ENCODE measurements at regions of chr13 and their contacts with region 1.

Region 1: GRCh38 chr13:50893211-50893852 is 16.3 kb upstream of the RNASEH2B start:
- DNase-seq: peak; percentile 64
- ATAC-seq: peak; percentile 83
- H3K4me3 ChIP-seq: peak overlapping the region in 4 of 5 experiments; percentile 11 to 55 (median 30)
- H3K4me3 Mint-ChIP-seq: peak overlapping the region; percentile 85
- H3K27ac ChIP-seq: peak overlapping the region; percentile 76 to 78
- H3K27ac Mint-ChIP-seq: peak overlapping the region; percentile 95
- H3K4me1 ChIP-seq: peaks cover 53 to 56% of the 10 kb centered on the region in 2 donors
- H3K4me1 Mint-ChIP-seq: peaks cover 57% of the 10 kb centered on the region
- H3K27me3 ChIP-seq: no peaks in the 10 kb centered on the region
- H3K27me3 Mint-ChIP-seq: no peaks in the 10 kb centered on the region
- CTCF ChIP-seq: no peak

Region 2: GRCh38 chr13:50810998-50811397 is 82.3 kb before region 1 on chr13:
- CTCF ChIA-PET with region 1: interaction called, 5 read pairs
- POLR2A ChIA-PET with region 1: interaction called, 7 read pairs
- intact Hi-C with region 1: loop called (anchors 5 kb)
- DNase-seq: peak; percentile 76
- ATAC-seq: peak; percentile 94
- H3K4me3 ChIP-seq: peak overlapping the region in 1 of 5 experiments; percentile 32
- H3K4me3 Mint-ChIP-seq: peak overlapping the region; percentile 64
- H3K27ac ChIP-seq: peak overlapping the region; percentile 78 to 89
- H3K27ac Mint-ChIP-seq: peak overlapping the region; percentile 77
- H3K4me1 ChIP-seq: peaks cover 28 to 29% of the 10 kb centered on the region in 2 donors
- H3K4me1 Mint-ChIP-seq: peaks cover 40% of the 10 kb centered on the region
- H3K27me3 ChIP-seq: no peaks in the 10 kb centered on the region
- H3K27me3 Mint-ChIP-seq: no peaks in the 10 kb centered on the region
- CTCF ChIP-seq: no peak

Measured in B cell (primary cell).